Panc1 (cell line): ENCODE measurements at regions of chr6 and their contacts with region 1.

Region 1: DNA sequence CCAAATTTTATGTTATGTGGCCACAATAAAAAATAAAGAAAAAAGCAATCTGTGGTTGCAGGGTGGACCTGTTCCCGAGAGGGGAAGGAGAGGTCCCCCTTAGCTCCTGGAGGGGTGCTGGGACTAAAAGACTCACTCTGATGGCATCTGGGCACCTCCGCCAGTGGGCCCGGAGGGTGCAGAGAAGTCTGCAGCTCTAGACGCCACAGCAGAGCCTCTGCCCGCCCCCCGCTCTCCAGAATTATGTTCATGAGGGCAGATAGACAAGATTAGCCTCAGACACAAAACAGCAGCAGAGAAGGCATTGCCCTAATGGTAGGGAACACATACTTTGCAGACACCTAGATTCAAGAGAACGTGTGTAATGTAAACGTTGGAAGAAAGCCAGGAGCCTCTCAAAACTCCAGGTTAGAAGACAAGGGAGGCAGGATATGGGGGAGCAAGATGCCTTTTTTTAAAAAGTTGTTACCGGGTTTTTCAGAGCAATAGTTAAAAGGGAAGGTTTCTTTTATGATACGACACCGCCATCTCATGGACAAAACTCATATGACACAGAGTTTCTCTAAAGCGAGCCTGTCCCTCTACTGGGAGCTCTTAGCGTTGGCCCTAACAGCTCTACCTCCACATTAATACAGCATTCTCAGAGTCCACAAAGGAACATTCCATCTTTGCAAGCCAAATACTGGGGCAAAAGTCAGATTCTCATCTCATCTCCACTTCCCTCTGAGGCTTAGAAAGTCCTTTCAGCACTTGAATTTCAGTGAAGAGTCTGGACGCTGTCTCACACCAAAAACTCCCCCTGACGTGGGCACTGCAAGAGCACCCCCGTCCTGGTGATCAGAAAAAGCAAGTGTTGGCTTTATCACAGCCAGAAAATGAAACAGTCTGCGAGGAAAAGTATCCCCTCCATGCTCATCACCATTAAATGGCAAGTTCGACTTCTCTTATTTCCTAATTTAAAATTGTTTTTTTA is 47.2 kb downstream of the FOXF2 start:
- DNase-seq: peak; percentile 53
- ATAC-seq: peak; percentile 94
- H3K4me3 ChIP-seq: 0 out of 4 replicates have a peak overlapping the region, but pooled peaks of 1 of the 2 experiments have one; percentile 9
- H3K27ac ChIP-seq: no peak overlapping the region
- H3K4me1 ChIP-seq: peaks cover 7% of the 10 kb centered on the region; the same call in 1 of the 2 replicates
- H3K27me3 ChIP-seq: no peaks in the 10 kb centered on the region
- CTCF ChIP-seq: peak; percentile 80

Region 2: DNA sequence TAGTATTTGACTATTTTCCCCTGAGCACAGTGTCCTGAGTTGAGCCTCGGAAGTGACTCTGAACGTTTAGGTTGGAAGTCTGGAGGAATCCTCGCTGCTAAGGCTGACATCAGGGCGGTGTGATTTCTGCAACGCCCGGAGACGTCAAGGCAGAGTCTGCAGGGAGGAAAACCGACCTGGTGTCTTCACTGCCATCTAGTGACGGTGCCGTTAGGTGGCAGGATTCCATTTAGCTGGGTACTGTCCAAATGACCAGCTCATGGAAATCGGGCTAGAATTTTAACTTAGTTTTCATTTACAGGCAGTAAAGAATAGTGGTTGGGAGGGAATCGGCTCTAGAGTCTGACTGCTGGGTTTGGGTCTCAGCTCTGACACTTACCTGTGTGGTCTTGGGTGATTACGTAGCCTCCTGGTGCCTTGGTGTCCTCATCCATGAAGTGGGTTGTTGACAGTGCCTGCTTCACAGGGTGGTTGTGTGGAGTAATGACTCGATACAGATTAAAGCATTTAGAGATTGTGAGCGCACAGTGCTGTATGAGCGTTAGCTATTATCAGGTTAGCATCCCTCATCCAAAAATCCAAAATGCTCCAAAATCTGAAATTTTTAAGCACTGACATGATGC is 12.2 kb before region 1 on chr6:
- CTCF ChIA-PET with region 1: interaction called, 11 read pairs
- POLR2A ChIA-PET with region 1: no interaction called
- in situ Hi-C with region 1: no loop called
- intact Hi-C with region 1: no loop called
- DNase-seq: peak; percentile 36
- ATAC-seq: peak; percentile 94
- H3K4me3 ChIP-seq: no peak overlapping the region
- H3K27ac ChIP-seq: no peak overlapping the region
- H3K4me1 ChIP-seq: peaks cover 19% of the 10 kb centered on the region; the same call in 1 of the 2 replicates
- H3K27me3 ChIP-seq: no peaks in the 10 kb centered on the region
- CTCF ChIP-seq: peak; percentile 90